ENCODE measurements at regions of chr17 and their contacts with region 1.

Region 1: DNA sequence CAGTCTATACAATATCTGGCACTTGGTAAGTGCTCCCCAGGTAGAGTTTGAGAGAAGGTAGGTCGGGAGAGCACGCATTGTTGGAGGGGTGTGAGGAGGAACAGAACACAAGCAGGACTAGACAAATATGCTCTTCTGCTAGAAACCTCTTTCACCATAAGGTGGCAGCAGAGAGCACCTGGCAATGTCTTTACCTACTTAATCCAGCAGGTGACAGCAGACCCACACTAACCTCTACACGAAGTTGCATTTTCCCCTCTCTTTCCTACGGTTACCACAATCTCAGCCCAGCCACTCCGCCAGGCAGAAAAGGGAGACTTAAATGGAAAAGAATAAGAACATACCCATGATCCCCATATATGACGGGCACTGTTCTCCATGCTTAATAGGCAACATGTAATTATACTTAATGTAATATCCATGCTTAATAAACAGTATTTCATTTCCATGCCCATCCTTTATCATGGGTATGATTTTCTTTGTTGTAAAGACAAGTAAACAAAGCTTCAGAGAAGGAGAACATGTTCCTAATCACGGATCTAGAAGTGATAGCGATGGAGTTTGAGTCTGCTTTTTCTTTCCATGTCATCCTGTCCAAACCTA is 55.1 kb upstream of the CCL2 start:
- DNase-seq: peak; percentile 82
- ATAC-seq: peak; percentile 69
- H3K4me3 Mint-ChIP-seq: no peak overlapping the region
- H3K27ac Mint-ChIP-seq: no peak overlapping the region
- H3K4me1 Mint-ChIP-seq: peaks cover 15% of the 10 kb centered on the region
- H3K27me3 Mint-ChIP-seq: peaks cover 43% of the 10 kb centered on the region

Region 2: GRCh38 chr17:34257299-34257985 is 57.4 kb after region 1 on chr17:
- CTCF ChIA-PET with region 1: interaction called, 6 read pairs
- POLR2A ChIA-PET with region 1: interaction called, 3 read pairs
- intact Hi-C with region 1: loop called in 1 of 2 experiments (anchors 2 kb)
- DNase-seq: no peak
- ATAC-seq: no peak
- H3K4me3 Mint-ChIP-seq: no peak overlapping the region
- H3K27ac Mint-ChIP-seq: no peak overlapping the region
- H3K4me1 Mint-ChIP-seq: peaks cover 6% of the 10 kb centered on the region
- H3K27me3 Mint-ChIP-seq: peaks cover 47% of the 10 kb centered on the region

Region 3: GRCh38 chr17:34354637-34355036 is 154.6 kb after region 1 on chr17:
- CTCF ChIA-PET with region 1: interaction called, 225 read pairs
- POLR2A ChIA-PET with region 1: no interaction called
- intact Hi-C with region 1: no loop called
- DNase-seq: no peak
- ATAC-seq: no peak
- H3K4me3 Mint-ChIP-seq: no peak overlapping the region
- H3K27ac Mint-ChIP-seq: no peak overlapping the region
- H3K4me1 Mint-ChIP-seq: no peaks in the 10 kb centered on the region
- H3K27me3 Mint-ChIP-seq: peaks cover 13% of the 10 kb centered on the region

Region 4: DNA sequence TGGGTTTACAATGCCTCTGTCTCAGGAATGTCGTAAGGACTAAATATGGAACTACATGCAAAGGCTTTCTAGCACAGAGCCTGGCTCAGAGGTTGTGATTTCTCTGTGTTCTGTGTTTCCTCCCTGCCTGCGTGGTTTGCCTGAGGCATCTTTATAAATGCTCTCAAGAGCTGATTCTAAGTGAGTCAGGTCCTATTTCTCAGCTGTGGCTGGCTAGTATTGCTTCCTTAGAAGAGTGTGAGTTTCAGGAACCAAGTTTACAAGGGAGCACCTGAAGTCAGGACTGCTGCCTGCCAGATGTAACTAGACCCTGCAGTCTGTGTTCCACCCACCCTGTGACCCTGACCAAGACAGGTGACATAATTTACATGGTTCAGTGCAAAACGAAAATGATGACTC is 171.0 kb after region 1 on chr17:
- CTCF ChIA-PET with region 1: interaction called, 11 read pairs
- POLR2A ChIA-PET with region 1: no interaction called
- intact Hi-C with region 1: loop called in 1 of 2 experiments (anchors 5 kb)
- DNase-seq: peak; percentile 33
- ATAC-seq: peak; percentile 84
- H3K4me3 Mint-ChIP-seq: no peak overlapping the region
- H3K27ac Mint-ChIP-seq: no peak overlapping the region
- H3K4me1 Mint-ChIP-seq: peaks cover 12% of the 10 kb centered on the region
- H3K27me3 Mint-ChIP-seq: peaks cover 9% of the 10 kb centered on the region

Region 5: GRCh38 chr17:34378664-34379101 is 178.7 kb after region 1 on chr17:
- CTCF ChIA-PET with region 1: interaction called, 12 read pairs
- POLR2A ChIA-PET with region 1: interaction called, 3 read pairs
- intact Hi-C with region 1: loop called (anchors 1 to 5 kb)
- DNase-seq: peak; percentile 65
- ATAC-seq: peak; percentile 63
- H3K4me3 Mint-ChIP-seq: no peak overlapping the region
- H3K27ac Mint-ChIP-seq: no peak overlapping the region
- H3K4me1 Mint-ChIP-seq: peaks cover 56% of the 10 kb centered on the region
- H3K27me3 Mint-ChIP-seq: peaks cover 17% of the 10 kb centered on the region

Measured in activated CD4-positive, alpha-beta T cell treated with anti-CD3 and anti-CD28 coated beads for 36 hours (primary cell).